Activated B cell treated with CpG ODN at 0.5 μM for 24 hours (primary cell): ENCODE measurements at regions of chr12 and their contacts with region 1.

Region 1: DNA sequence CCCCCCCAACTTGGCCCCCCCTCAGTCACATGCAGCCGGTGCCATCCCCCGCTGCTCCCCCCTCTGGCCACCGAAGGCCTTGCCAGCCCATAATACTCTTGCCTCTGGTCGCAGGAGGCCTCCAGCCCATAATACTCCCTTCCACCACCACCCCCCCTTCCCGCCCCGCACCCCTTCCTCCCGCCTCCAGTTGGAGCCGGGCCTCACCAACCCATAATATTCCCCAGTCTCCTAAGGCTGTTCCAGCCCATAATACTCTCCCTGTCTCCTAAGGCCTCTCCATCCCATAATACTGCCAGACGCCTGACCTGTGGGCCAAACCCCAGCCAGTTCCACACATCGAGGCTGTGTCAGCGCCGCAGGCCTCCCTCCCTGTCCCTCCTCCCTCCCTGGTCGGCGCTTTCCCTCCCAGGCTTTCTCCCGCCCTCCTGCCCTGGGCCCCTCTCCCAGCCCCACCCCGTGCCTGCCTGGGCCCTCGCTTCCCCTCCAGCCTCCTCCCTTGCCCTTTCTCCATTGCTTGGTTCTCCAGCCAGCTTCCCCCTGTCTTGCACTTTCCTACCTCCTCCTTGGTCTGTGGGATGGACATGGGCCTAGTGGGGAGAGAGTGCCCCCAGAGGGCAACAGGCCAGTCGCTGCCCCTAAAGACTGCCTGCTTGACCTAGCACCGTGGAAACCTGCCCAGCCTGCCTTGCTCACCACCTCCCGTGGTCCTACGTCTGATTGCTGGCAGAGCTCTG is 6.8 kb upstream of the CHD4 start:
- DNase-seq: peak; percentile 28
- ATAC-seq: peak; percentile 36
- H3K4me3 Mint-ChIP-seq: no peak overlapping the region
- H3K27ac Mint-ChIP-seq: peak overlapping the region; percentile 88
- H3K4me1 Mint-ChIP-seq: peaks cover 75% of the 10 kb centered on the region
- H3K27me3 Mint-ChIP-seq: no peaks in the 10 kb centered on the region
- CTCF ChIP-seq: no peak

Region 2: GRCh38 chr12:6493497-6494257 is 120.3 kb before region 1 on chr12 and contains the start of gene NCAPD2:
- CTCF ChIA-PET with region 1: no interaction called
- POLR2A ChIA-PET with region 1: no interaction called
- intact Hi-C with region 1: no loop called
- DNase-seq: peak; percentile 85
- ATAC-seq: peak; percentile 85
- H3K4me3 Mint-ChIP-seq: peak within 1 kb of the TSS; percentile 97
- H3K27ac Mint-ChIP-seq: peak within 1 kb of the TSS; percentile 96
- H3K4me1 Mint-ChIP-seq: peaks cover 28% of the 10 kb centered on the region
- H3K27me3 Mint-ChIP-seq: no peaks in the 10 kb centered on the region
- CTCF ChIP-seq: no peak
- total RNA-seq, gene NCAPD2: 38.4 and 40.9 TPM in 2 replicates

Region 3: DNA sequence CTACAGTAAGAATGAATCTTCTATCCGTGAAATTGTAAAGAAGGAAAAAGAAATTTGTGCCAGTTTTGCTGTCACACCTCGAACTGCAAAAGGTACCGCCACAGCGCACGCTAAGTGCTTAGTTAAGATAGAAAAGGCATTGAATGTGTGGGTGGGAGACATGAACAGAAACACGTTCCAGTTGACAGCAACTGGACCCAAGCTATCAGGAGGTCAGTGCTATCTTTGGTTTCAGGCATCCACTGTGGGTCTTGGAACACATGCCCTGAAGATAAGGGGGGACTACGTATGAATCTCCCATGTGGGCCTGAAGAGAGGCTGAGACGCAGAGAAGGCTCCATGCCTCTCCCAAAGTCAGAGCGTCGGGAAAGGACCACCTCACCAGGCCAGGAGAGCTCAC is 67.9 kb before region 1 on chr12:
- CTCF ChIA-PET with region 1: no interaction called
- POLR2A ChIA-PET with region 1: no interaction called
- intact Hi-C with region 1: no loop called
- DNase-seq: no peak
- ATAC-seq: no peak
- H3K4me3 Mint-ChIP-seq: no peak overlapping the region
- H3K27ac Mint-ChIP-seq: no peak overlapping the region
- H3K4me1 Mint-ChIP-seq: peaks cover 5% of the 10 kb centered on the region
- H3K27me3 Mint-ChIP-seq: no peaks in the 10 kb centered on the region
- CTCF ChIP-seq: no peak

Region 4: DNA sequence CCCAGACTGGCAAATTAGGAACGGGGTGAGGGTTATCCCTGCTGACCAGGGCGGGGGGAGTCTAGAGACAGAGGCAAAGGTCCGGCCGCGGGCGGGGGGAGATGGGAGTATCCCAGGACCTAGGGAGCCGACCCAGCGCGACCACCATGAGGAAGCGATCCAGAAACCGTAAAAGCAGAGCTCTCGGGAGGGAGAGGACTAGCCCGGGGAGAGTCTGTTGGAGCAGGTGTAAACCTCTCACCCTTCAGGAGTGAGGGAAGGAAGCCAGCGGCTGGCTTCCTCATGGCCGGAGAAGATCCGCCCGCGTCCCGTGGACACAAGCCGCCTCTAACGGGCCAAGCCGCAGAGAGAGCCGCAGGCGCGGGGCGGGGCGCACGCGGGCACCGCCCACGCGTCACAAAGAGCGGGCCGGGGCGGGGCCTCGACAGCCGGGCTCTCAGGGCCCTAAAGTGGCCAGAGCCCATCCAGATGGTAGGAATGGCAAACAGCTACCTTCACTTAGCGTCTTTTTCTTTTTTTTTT is 33.2 kb after region 1 on chr12 and contains the start of gene ACRBP:
- CTCF ChIA-PET with region 1: interaction called, 26 read pairs
- POLR2A ChIA-PET with region 1: interaction called, 6 read pairs
- intact Hi-C with region 1: loop called (anchors 1 kb)
- DNase-seq: peak; percentile 71
- ATAC-seq: peak; percentile 83
- H3K4me3 Mint-ChIP-seq: peak within 1 kb of the TSS; percentile 84
- H3K27ac Mint-ChIP-seq: peak within 1 kb of the TSS; percentile 74
- H3K4me1 Mint-ChIP-seq: peaks cover 39% of the 10 kb centered on the region
- H3K27me3 Mint-ChIP-seq: no peaks in the 10 kb centered on the region
- CTCF ChIP-seq: no peak
- total RNA-seq, gene ACRBP: 5.4 and 7.7 TPM in 2 replicates

Region 5: DNA sequence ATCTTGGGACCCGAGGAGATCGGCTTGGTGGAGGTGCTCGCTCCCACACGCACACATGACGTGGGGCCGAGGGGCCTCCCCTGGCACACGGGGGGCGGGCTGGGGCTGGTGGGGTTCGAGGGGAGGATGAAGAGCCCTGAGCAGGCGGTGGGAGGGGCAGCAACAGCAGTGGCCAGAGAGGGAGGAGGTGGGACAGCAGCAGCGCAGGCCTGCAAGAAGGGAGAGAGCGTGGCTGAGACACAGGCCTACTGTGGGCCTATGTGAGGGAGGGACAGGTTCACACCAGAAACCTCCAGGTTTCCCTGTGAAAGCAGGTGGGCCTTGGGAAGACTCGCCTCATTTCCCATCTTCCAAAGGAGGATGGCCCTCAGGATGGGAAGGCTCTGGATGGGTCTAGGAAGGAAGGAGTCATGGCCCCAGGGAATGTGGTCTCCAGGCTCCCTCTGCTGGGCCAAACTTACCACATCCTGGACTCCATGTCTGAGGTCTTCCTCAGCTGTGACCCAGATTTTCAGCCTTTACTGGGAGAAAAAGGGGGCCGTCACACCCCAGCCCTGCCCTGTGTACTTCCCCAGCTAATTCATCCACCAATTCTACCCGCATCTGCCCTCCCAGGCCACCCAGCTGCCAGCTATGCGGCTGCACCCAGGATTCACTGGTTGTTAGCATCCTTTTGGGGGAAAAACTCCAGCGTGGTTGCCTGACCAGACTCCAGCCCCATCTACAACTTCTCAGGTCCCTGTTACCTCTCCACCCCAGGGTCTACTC is 83.8 kb after region 1 on chr12:
- CTCF ChIA-PET with region 1: interaction called, 3 read pairs
- POLR2A ChIA-PET with region 1: interaction called, 6 read pairs
- intact Hi-C with region 1: loop called (anchors 1 kb)
- DNase-seq: no peak
- ATAC-seq: no peak
- H3K4me3 Mint-ChIP-seq: peak overlapping the region; percentile 42
- H3K27ac Mint-ChIP-seq: peak overlapping the region; percentile 74
- H3K4me1 Mint-ChIP-seq: peaks cover 60% of the 10 kb centered on the region
- H3K27me3 Mint-ChIP-seq: peaks cover 18% of the 10 kb centered on the region
- CTCF ChIP-seq: no peak

Region 6: GRCh38 chr12:6778574-6779550 is 164.9 kb after region 1 on chr12:
- CTCF ChIA-PET with region 1: interaction called, 3 read pairs
- POLR2A ChIA-PET with region 1: no interaction called
- intact Hi-C with region 1: loop called (anchors 1 kb)
- DNase-seq: peak; percentile 77
- ATAC-seq: peak; percentile 98
- H3K4me3 Mint-ChIP-seq: peak overlapping the region; percentile 74
- H3K27ac Mint-ChIP-seq: peak overlapping the region; percentile 4
- H3K4me1 Mint-ChIP-seq: peaks cover 9% of the 10 kb centered on the region
- H3K27me3 Mint-ChIP-seq: peaks cover 42% of the 10 kb centered on the region
- CTCF ChIP-seq: peak; percentile 68

Region 7: DNA sequence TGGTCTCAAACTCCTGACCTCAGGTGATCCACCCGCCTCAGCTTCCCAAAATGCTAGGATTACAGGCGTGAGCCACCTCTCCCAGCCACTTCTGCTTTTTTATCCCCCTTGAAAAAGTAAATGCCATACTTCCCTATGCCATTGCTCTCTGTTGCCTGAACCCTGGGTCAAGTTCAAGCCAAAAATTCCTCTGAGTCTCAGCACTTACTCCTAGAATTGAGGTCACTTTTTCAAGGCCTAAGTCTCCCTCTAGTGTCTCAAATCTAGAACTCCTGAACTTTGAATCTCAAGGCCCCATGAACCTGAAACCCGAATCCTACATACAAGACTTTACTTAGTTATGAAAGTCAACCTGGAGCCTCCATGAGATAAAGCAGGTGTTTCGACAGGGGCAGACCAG is 1053.2 kb after region 1 on chr12:
- CTCF ChIA-PET with region 1: no interaction called
- POLR2A ChIA-PET with region 1: no interaction called
- intact Hi-C with region 1: no loop called
- DNase-seq: no peak
- ATAC-seq: no peak
- H3K4me3 Mint-ChIP-seq: no peak overlapping the region
- H3K27ac Mint-ChIP-seq: no peak overlapping the region
- H3K4me1 Mint-ChIP-seq: no peaks in the 10 kb centered on the region
- H3K27me3 Mint-ChIP-seq: no peaks in the 10 kb centered on the region
- CTCF ChIP-seq: no peak